Right ventricle myocardium inferior (tissue), 1 donor: ENCODE measurements at regions of chr3 and their contacts with region 1.

Region 1: GRCh38 chr3:65412588-65412987 is 626.1 kb downstream of the MAGI1 start:
- DNase-seq: peak; percentile 68
- ATAC-seq: peak; percentile 92

Region 2: GRCh38 chr3:65178703-65179102 is 233.9 kb before region 1 on chr3:
- intact Hi-C with region 1: no loop called
- DNase-seq: no peak
- ATAC-seq: no peak

Region 3: DNA sequence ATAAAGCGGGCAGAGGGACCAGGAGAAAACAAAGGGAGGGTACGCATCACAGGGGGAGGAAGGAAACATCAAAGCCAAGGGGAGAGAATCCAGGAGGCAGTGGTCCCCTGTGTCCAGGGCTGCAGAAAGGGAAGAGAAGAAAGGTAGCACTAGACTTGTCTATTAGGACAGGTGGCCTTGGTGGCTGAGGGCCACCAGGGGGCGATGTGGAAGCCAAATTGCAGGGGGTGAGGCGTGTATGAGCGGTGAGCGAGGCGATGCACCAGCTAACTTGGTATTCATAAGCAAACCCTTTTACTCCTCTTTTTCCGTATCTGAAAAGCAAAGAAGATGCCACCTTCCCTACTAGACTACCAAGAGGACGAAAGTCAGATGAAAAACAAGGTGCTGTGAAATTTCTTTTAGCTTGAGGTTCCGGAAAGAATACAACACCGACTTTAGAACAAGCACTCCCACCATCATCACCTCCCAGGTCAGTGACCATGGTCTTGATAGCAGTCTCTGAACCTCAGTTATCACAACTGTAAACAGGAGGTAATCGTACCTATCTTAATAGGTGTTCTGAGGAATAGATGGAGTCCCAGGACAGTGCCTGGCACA is 70.4 kb before region 1 on chr3:
- intact Hi-C with region 1: loop called (anchors 5 kb)
- DNase-seq: no peak
- ATAC-seq: peak; percentile 57

Region 4: GRCh38 chr3:65575373-65575840 is 162.8 kb after region 1 on chr3:
- intact Hi-C with region 1: no loop called
- DNase-seq: no peak
- ATAC-seq: no peak

Region 5: GRCh38 chr3:66507423-66508260 is 1095.1 kb after region 1 on chr3:
- intact Hi-C with region 1: no loop called
- DNase-seq: no peak
- ATAC-seq: peak; percentile 90